SK-N-SH (cell line): ENCODE measurements at regions of chr11 and their contacts with region 1.

Region 1: GRCh38 chr11:17972987-17973386 is 39.9 kb downstream of the SERGEF start:
- DNase-seq: peak; percentile 61
- H3K4me3 ChIP-seq: peak overlapping the region in 1 of 2 experiments; percentile 49; a peak in 1 of 4 replicates
- H3K27ac ChIP-seq: no peak overlapping the region
- H3K4me1 ChIP-seq: no peaks in the 10 kb centered on the region
- H3K27me3 ChIP-seq: no peaks in the 10 kb centered on the region
- CTCF ChIP-seq: peak; percentile 57
- EP300 ChIP-seq: no peak
- RAD21 ChIP-seq: peak; percentile 82

Region 2: DNA sequence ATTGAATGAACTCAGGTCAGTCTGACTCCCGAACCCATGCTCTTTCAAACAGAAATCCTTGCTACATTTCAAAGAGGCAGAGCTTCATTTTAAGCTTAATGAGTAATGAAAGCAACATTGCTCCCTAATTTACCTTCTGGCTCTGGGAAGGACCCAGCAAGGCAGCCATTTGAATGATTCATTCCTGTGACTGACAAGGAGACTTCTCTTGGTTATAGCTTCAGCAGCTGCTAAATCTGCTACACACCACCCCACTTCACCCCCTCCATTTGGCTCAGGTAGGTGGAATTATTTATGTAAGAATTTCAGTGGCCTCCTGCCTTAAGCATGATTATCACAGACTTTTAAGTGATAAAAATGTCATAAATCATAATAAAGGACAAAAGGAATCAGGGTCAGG is 120.7 kb before region 1 on chr11:
- CTCF ChIA-PET with region 1: interaction called, 10 read pairs
- POLR2A ChIA-PET with region 1: no interaction called
- DNase-seq: no peak
- H3K4me3 ChIP-seq: no peak overlapping the region
- H3K27ac ChIP-seq: no peak overlapping the region
- H3K4me1 ChIP-seq: peaks cover 0 to 14% of the 10 kb centered on the region in 2 experiments; a peak in 2 of 4 replicates
- H3K27me3 ChIP-seq: no peaks in the 10 kb centered on the region
- CTCF ChIP-seq: no peak
- EP300 ChIP-seq: no peak
- RAD21 ChIP-seq: no peak

Region 3: GRCh38 chr11:17986007-17986710 is 13.2 kb after region 1 on chr11:
- CTCF ChIA-PET with region 1: interaction called, 53 read pairs
- POLR2A ChIA-PET with region 1: no interaction called
- DNase-seq: no peak
- H3K4me3 ChIP-seq: no peak overlapping the region
- H3K27ac ChIP-seq: peak overlapping the region in 1 of 2 experiments; percentile 22; a peak in 2 of 4 replicates
- H3K4me1 ChIP-seq: peaks cover 5 to 6% of the 10 kb centered on the region in 2 experiments; a peak in 1 of 4 replicates
- H3K27me3 ChIP-seq: no peaks in the 10 kb centered on the region
- CTCF ChIP-seq: no peak
- EP300 ChIP-seq: no peak
- RAD21 ChIP-seq: no peak

Region 4: DNA sequence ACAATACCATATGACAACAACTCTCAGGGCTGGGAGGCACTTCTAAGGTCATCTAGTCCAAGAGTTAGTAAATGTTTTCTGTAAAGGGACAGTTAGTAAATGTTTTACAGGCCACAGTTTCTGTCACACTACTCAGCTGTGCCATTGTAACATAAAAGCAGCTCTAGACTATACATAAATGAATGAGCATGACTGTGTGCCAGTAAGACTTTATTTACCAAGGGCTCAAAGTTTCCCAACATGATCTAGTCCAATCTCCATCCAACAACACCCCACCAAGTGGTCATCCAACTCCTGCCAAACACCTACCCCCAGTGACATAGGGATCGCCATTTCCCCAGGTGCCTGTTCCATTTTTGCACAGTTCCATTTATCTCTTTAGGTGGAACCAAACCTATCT is 27.8 kb after region 1 on chr11:
- CTCF ChIA-PET with region 1: no interaction called
- POLR2A ChIA-PET with region 1: no interaction called
- DNase-seq: no peak
- H3K4me3 ChIP-seq: no peak overlapping the region
- H3K27ac ChIP-seq: no peak overlapping the region
- H3K4me1 ChIP-seq: no peaks in the 10 kb centered on the region
- H3K27me3 ChIP-seq: no peaks in the 10 kb centered on the region
- CTCF ChIP-seq: no peak
- EP300 ChIP-seq: no peak
- RAD21 ChIP-seq: no peak

Region 5: DNA sequence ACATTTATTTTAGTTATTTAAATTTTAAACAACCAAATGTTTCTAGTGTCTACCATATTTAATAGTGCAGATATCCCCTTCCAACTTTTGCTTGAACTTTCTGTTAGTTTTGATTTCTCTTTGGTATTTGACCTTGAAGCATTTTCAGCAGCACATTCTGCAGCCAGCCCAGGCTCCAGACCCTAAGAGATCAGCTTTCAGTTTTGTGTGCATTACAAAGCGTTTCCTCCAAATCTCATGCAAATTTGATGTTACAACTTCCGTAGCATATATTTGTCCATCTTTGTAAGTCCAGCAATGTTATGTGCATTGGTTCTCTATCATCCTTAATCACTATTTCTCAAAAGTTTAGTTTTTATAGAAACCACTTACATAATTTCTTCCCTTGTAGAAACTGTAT is 54.5 kb after region 1 on chr11:
- CTCF ChIA-PET with region 1: no interaction called
- POLR2A ChIA-PET with region 1: no interaction called
- DNase-seq: no peak
- H3K4me3 ChIP-seq: no peak overlapping the region
- H3K27ac ChIP-seq: no peak overlapping the region
- H3K4me1 ChIP-seq: no peaks in the 10 kb centered on the region
- H3K27me3 ChIP-seq: peaks cover 6% of the 10 kb centered on the region; the same call in 1 of the 2 replicates
- CTCF ChIP-seq: no peak
- EP300 ChIP-seq: no peak
- RAD21 ChIP-seq: no peak